K562 (cell line): ENCODE measurements at regions of chr10 and their contacts with region 1.

Region 1: GRCh38 chr10:59625721-59626522 is 83.7 kb downstream of the SLC16A9 start:
- DNase-seq: peak; percentile 63 to 78 (median 67)
- ATAC-seq: peak; percentile 91
- H3K4me3 ChIP-seq: no peak overlapping the region
- H3K27ac ChIP-seq: no peak overlapping the region
- H3K4me1 ChIP-seq: no peaks in the 10 kb centered on the region
- H3K27me3 ChIP-seq: no peaks in the 10 kb centered on the region; a peak in 1 of 5 replicates
- CTCF ChIP-seq: peak; percentile 84 to 98 (median 97)
- EP300 ChIP-seq: no peak
- POLR2A ChIP-seq: no peak
- RAD21 ChIP-seq: peak; percentile 97 to 99

Region 2: DNA sequence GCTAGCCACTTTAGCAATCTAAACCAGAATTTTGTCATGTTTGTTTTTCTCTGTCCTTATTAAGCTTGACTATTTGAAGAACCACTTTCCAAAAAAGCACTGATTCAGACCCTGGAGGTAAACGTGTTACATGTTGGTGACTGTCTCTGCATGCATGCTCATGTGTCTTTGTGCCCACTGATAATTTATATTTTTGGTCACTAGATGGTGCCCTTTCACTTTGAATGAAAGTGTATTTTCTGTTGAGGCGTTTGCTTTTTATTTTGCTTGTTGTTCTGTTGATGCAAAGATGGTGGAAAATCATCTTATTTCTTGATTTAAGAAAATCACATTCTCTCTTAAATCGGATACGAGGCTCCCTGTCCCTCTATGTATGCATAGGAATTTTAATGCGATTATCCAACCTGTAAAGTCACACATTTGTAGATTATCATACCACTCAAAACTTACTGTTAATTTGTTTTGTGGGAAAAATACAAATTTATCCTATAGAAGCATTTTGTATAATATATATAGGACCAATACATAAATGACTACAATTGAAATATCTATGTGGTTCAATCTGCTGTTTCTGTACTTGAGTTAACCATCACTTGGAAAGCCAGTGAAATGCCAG is 843.9 kb before region 1 on chr10:
- CTCF ChIA-PET with region 1: interaction called, 11 read pairs
- POLR2A ChIA-PET with region 1: no interaction called
- in situ Hi-C with region 1: no loop called
- intact Hi-C with region 1: loop called (anchors 5 kb)
- DNase-seq: peak; percentile 23 to 48 (median 44)
- ATAC-seq: peak; percentile 57; the same call in 1 of the 3 replicates
- H3K4me3 ChIP-seq: no peak overlapping the region
- H3K27ac ChIP-seq: no peak overlapping the region
- H3K4me1 ChIP-seq: no peaks in the 10 kb centered on the region
- H3K27me3 ChIP-seq: no peaks in the 10 kb centered on the region
- CTCF ChIP-seq: peak; percentile 29 to 71 (median 46); a peak in 4 of 6 replicates
- EP300 ChIP-seq: no peak
- POLR2A ChIP-seq: no peak
- RAD21 ChIP-seq: peak; percentile 60 to 74

Region 3: DNA sequence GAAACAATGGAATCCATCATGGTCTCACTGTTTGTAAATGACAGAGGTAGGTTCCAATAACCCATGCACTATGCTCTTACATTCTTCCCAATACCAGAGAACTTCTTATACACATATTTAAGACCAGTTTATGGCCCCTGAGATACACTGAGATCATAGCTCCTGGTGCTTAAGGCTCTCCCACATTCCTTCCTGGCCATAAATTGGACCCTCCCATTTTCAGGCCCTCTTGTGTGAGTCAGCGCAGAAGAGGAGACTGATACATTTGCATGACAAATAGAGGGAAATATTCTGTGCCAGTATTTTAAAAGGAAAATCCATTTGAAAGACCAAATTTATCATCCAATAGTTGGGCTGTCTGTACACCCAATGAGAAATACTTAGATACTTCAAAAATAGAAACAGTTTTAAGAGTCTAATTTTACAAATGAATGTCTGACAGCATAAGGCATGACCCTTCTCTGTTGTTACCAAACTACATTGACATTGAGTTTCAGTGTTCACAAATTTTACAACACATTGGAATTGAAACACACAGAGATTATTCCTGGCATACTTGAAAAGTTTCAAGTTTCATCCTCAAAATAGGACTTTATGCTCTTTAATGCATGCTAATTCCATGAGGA is 48.4 kb after region 1 on chr10:
- CTCF ChIA-PET with region 1: interaction called, 3 read pairs
- POLR2A ChIA-PET with region 1: no interaction called
- in situ Hi-C with region 1: no loop called
- intact Hi-C with region 1: loop called (anchors 2 kb)
- DNase-seq: peak in 1 of 4 experiments; percentile 37
- ATAC-seq: no peak; the same call in 2 of the 3 replicates
- H3K4me3 ChIP-seq: no peak overlapping the region
- H3K27ac ChIP-seq: no peak overlapping the region
- H3K4me1 ChIP-seq: no peaks in the 10 kb centered on the region
- H3K27me3 ChIP-seq: no peaks in the 10 kb centered on the region
- CTCF ChIP-seq: no peak
- EP300 ChIP-seq: no peak
- POLR2A ChIP-seq: no peak
- RAD21 ChIP-seq: no peak

Region 4: GRCh38 chr10:59830601-59831259 is 204.8 kb after region 1 on chr10:
- CTCF ChIA-PET with region 1: interaction called, 4 read pairs
- POLR2A ChIA-PET with region 1: no interaction called
- in situ Hi-C with region 1: no loop called
- intact Hi-C with region 1: loop called (anchors 1 kb)
- DNase-seq: peak; percentile 70 to 77 (median 74)
- ATAC-seq: peak; percentile 92
- H3K4me3 ChIP-seq: no peak overlapping the region
- H3K27ac ChIP-seq: no peak overlapping the region
- H3K4me1 ChIP-seq: peaks cover 0 to 13% of the 10 kb centered on the region in 2 experiments; a peak in 4 of 5 replicates
- H3K27me3 ChIP-seq: no peaks in the 10 kb centered on the region
- CTCF ChIP-seq: peak; percentile 72 to 83 (median 76)
- EP300 ChIP-seq: no peak
- POLR2A ChIP-seq: no peak
- RAD21 ChIP-seq: peak; percentile 70 to 75

Region 5: DNA sequence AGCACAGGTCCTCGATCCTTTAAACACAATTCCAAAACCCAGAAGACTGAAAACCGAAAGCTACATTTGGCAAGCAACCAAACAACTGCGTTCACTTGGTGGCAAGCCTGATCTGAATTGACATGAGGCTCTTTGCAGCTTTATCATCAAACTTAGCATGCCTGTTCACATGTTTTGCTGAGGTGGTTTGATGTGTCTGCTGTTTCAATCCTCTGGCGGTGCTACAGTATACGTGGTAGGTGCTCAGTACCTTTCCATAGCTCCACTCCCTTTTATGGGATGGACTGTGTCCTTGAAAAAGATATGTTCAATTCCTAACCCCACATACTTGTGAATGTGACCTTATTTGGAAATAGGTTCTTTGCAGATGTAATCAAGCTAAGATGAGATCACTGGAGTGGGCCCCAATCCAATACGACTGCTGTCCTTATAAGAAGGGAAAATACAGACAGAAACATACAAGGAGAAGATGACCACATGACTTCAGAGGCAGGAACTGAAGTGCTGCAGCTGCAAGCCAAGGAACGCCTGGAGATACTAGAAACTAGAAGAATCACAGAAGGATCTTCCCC is 247.1 kb after region 1 on chr10:
- CTCF ChIA-PET with region 1: no interaction called
- POLR2A ChIA-PET with region 1: no interaction called
- in situ Hi-C with region 1: no loop called
- intact Hi-C with region 1: no loop called
- DNase-seq: peak in 1 of 4 experiments; percentile 46
- ATAC-seq: peak; percentile 51
- H3K4me3 ChIP-seq: no peak overlapping the region
- H3K27ac ChIP-seq: peak overlapping the region; percentile 51; the same call in 2 of the 3 replicates
- H3K4me1 ChIP-seq: peaks cover 0 to 41% of the 10 kb centered on the region in 2 experiments; a peak in 4 of 5 replicates
- H3K27me3 ChIP-seq: no peaks in the 10 kb centered on the region
- CTCF ChIP-seq: no peak
- EP300 ChIP-seq: no peak; the same call in 1 of the 2 replicates
- POLR2A ChIP-seq: no peak
- RAD21 ChIP-seq: no peak

Region 6: DNA sequence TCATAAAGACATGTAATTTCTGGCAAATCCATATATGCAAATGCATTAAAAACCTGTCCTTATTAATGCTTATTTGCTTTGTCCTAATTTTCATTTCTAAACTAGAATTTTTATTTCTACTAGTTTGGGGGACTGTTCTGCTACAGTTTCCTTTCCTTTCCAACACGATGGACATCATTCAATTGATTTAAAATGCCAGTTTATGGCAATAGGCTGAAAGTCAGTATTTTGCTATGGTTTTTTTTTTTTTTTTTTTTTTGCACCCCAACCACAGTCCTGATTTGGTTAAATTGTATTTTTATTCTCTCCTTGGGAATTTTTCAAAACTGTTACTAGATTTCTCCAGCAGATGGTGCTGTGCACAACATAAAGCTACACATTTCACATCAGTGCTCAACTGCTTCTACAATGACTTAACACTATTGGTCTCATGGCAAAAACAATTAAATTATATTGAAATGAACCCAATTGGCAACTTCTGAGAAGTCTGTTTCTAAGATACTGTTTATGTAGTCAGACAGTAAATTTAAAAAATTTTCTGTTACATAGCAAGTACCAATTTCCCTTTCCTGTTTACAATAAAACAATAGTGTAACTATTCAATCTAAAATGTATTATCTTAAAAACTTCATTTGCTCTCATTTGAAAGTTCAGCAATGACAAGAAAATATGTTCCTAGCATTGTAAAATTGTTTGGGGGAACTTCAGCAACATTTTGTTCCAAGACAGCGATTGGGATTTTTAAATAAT is 474.3 kb after region 1 on chr10:
- CTCF ChIA-PET with region 1: interaction called, 4 read pairs
- POLR2A ChIA-PET with region 1: no interaction called
- in situ Hi-C with region 1: no loop called
- intact Hi-C with region 1: loop called (anchors 10 kb)
- DNase-seq: peak; percentile 53 to 77 (median 60)
- ATAC-seq: peak; percentile 83
- H3K4me3 ChIP-seq: no peak overlapping the region
- H3K27ac ChIP-seq: peak overlapping the region; percentile 54; the same call in 1 of the 3 replicates
- H3K4me1 ChIP-seq: peaks cover 0 to 7% of the 10 kb centered on the region in 2 experiments; a peak in 2 of 5 replicates
- H3K27me3 ChIP-seq: no peaks in the 10 kb centered on the region
- CTCF ChIP-seq: peak; percentile 55 to 89 (median 61); a peak in 4 of 6 replicates
- EP300 ChIP-seq: peak; percentile 50; the same call in 1 of the 2 replicates
- POLR2A ChIP-seq: no peak
- RAD21 ChIP-seq: peak; percentile 65 to 85